HCT116 (cell line): ENCODE measurements at regions of chr9 and their contacts with region 1.

Region 1: GRCh38 chr9:121399883-121400607 is 30.0 kb upstream of the STOM start:
- DNase-seq: peak; percentile 74
- ATAC-seq: peak; percentile 84
- H3K4me3 ChIP-seq: no peak overlapping the region
- H3K27ac ChIP-seq: no peak overlapping the region
- H3K4me1 ChIP-seq: peaks cover 0 to 3% of the 10 kb centered on the region in 2 experiments; a peak in 1 of 4 replicates
- H3K27me3 ChIP-seq: no peaks in the 10 kb centered on the region
- CTCF ChIP-seq: peak; percentile 41 to 93 (median 73)
- POLR2A ChIP-seq: no peak
- RAD21 ChIP-seq: peak; percentile 91

Region 2: GRCh38 chr9:120755827-120756434 is 644.1 kb before region 1 on chr9:
- CTCF ChIA-PET with region 1: interaction called, 3 read pairs
- POLR2A ChIA-PET with region 1: no interaction called
- RAD21 ChIA-PET with region 1: no interaction called
- intact Hi-C with region 1: loop called (anchors 2 kb)
- DNase-seq: peak; percentile 24
- ATAC-seq: peak; percentile 86
- H3K4me3 ChIP-seq: no peak overlapping the region
- H3K27ac ChIP-seq: no peak overlapping the region
- H3K4me1 ChIP-seq: no peaks in the 10 kb centered on the region
- H3K27me3 ChIP-seq: no peaks in the 10 kb centered on the region
- CTCF ChIP-seq: peak; percentile 74 to 93 (median 76)
- POLR2A ChIP-seq: no peak
- RAD21 ChIP-seq: peak; percentile 92

Region 3: DNA sequence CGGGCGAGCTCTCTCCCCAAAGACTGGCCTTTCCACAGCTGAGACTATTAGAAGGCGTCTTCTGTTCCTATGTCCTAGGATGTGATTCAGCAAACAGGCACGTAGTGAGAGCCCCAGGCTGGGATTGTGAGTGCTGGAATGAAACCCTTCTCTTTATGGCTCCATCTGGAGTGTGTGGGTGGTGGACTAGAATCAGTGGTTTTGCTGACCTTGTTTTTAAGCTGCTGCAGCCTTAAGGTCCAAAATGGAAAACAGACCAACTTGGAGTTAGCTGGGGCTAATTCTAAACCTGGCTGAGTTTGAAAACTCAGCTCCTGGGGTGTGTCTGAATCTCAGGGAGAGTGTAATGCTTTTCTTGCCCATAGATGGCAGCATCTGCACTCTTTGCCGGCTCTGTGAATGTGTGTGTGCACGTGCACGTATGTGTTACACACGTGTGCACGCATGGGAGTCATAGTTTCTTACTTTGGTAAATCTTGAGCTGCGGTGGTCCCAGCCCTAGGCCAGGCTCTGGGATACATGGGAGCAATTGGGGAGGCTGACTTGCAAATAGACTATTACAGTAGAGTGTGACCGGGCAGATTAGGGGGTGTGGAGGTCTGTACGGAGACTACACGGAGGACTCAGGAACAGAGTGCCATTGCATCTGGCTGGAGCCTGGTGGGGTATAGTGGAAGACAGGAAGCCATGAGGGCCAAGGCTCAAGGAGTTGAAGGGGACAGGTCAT is 121.3 kb before region 1 on chr9:
- CTCF ChIA-PET with region 1: interaction called, 12 read pairs
- POLR2A ChIA-PET with region 1: no interaction called
- RAD21 ChIA-PET with region 1: interaction called in 1 of 2 experiments, 3 read pairs
- intact Hi-C with region 1: loop called (anchors 1 kb)
- DNase-seq: peak; percentile 59
- ATAC-seq: peak; percentile 68
- H3K4me3 ChIP-seq: peak overlapping the region; percentile 0 to 43; a peak in 2 of 4 replicates
- H3K27ac ChIP-seq: peak overlapping the region; percentile 56
- H3K4me1 ChIP-seq: peaks cover 61 to 74% of the 10 kb centered on the region in 2 experiments
- H3K27me3 ChIP-seq: no peaks in the 10 kb centered on the region
- CTCF ChIP-seq: peak in 2 of 3 experiments; percentile 84 to 89; a peak in 4 of 6 replicates
- POLR2A ChIP-seq: no peak
- RAD21 ChIP-seq: no peak

Region 4: DNA sequence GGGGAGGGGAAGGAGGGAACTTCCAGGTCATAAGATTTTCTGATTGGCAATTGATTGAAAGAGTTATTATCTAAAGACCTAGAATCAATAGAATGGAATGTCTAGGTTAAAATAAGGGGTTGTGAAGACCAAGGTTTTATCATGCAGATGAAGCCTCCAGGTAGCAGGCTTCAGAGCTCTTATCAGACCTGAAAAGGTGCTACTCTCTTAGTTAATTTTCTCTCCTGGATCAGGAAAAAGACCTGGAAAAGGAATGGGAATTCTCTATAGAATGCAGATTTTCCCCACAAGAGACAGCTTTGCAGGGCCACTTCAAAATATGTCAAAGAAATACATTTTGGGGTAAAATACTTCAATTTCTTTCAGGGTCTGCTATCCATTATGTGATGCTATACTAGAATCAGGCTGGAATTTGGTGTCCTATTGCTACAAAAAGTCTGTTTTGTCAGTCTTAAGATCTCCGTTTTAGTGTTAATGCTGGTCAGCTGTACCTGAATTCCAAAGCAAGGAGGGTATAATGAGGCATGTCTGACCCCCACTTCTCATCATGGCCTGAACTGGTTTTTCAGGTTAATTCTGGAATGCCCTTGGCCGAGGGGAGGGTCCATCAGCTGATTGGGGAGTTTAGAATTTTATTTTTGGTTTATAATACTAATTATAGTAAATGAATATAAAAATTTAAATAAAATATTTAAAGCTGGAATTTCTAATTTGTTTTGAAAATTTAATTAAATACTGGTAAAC is 13.4 kb before region 1 on chr9:
- CTCF ChIA-PET with region 1: interaction called, 12 read pairs
- POLR2A ChIA-PET with region 1: no interaction called
- RAD21 ChIA-PET with region 1: no interaction called
- intact Hi-C with region 1: no loop called
- DNase-seq: no peak
- ATAC-seq: no peak
- H3K4me3 ChIP-seq: no peak overlapping the region
- H3K27ac ChIP-seq: no peak overlapping the region
- H3K4me1 ChIP-seq: no peaks in the 10 kb centered on the region
- H3K27me3 ChIP-seq: no peaks in the 10 kb centered on the region
- CTCF ChIP-seq: no peak
- POLR2A ChIP-seq: no peak
- RAD21 ChIP-seq: no peak